Naive thymus-derived CD4-positive, alpha-beta T cell (primary cell): ENCODE measurements at regions of chr14 and their contacts with region 1.

Region 1: DNA sequence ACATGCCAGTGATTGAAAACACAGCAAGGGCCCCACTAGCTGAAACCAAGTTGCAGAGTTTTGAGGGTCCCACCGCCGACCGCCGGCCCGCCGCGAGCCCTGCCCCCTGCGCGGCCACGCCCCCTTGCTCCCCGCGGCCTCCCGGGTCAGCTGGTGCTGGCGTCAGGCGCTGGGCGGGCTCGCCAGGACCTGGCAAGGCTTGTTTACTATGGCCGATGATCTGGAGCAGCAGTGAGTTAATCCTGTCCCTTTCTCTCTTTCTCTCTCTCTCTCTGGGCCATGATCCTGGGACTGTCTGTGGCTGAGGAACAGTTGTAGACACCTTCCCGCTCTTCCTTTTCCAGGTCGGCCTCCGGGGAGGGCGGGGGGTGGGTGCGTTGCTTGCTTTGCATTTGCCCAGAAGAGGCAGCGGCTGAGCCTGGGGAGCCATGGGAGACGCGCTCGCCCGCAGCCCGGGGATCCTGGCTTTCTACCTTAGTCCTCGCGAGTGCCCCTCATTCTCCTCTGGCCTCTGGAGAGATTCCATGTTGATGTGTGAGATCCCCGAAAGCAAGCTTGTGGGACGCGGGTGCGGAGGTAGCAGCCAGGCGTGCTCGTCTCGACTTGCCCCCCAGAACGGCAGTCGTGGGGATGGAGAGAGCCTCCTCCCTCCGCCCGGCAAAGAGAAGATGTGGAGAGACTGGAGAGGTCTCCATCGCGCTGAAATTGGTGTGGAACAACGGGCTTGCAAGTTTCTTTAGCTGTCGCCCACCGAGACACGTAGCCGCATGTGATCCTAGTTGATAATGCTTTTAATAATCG is at the start of gene ABHD4:
- DNase-seq: peak; percentile 31 to 79 (median 43)
- ATAC-seq: peak; percentile 93
- H3K4me3 ChIP-seq: peak within 1 kb of the TSS; percentile 88
- H3K4me3 Mint-ChIP-seq: peak within 1 kb of the TSS; percentile 89 to 99 (median 96)
- H3K27ac ChIP-seq: peak within 1 kb of the TSS; percentile 74
- H3K27ac Mint-ChIP-seq: peak within 1 kb of the TSS; percentile 76 to 96 (median 91)
- H3K4me1 ChIP-seq: peaks cover 10 to 15% of the 10 kb centered on the region in 2 donors
- H3K4me1 Mint-ChIP-seq: peaks cover 23 to 44% (median 35%) of the 10 kb centered on the region in 7 donors
- H3K27me3 ChIP-seq: no peaks in the 10 kb centered on the region
- H3K27me3 Mint-ChIP-seq: peaks cover 0 to 12% (median 0%) of the 10 kb centered on the region in 5 donors
- total RNA-seq, gene ABHD4: 10.5 to 16.3 (median 14.7) TPM

Region 2: GRCh38 chr14:22583994-22584393 is 14.3 kb before region 1 on chr14:
- CTCF ChIA-PET with region 1: interaction called, 13 read pairs
- POLR2A ChIA-PET with region 1: interaction called, 61 read pairs
- intact Hi-C with region 1: loop called in 1 of 2 experiments (anchors 1 kb)
- DNase-seq: peak in 1 of 9 donors; percentile 15
- ATAC-seq: no peak
- H3K4me3 ChIP-seq: no peak overlapping the region
- H3K4me3 Mint-ChIP-seq: peak overlapping the region in 9 of 10 donors; percentile 29 to 86 (median 61)
- H3K27ac ChIP-seq: peak overlapping the region; percentile 48
- H3K27ac Mint-ChIP-seq: peak overlapping the region; percentile 29 to 100 (median 84)
- H3K4me1 ChIP-seq: peaks cover 37 to 50% of the 10 kb centered on the region in 2 donors
- H3K4me1 Mint-ChIP-seq: peaks cover 62 to 89% (median 78%) of the 10 kb centered on the region in 7 donors
- H3K27me3 ChIP-seq: no peaks in the 10 kb centered on the region
- H3K27me3 Mint-ChIP-seq: peaks cover 0 to 2% (median 0%) of the 10 kb centered on the region in 5 donors

Region 3: DNA sequence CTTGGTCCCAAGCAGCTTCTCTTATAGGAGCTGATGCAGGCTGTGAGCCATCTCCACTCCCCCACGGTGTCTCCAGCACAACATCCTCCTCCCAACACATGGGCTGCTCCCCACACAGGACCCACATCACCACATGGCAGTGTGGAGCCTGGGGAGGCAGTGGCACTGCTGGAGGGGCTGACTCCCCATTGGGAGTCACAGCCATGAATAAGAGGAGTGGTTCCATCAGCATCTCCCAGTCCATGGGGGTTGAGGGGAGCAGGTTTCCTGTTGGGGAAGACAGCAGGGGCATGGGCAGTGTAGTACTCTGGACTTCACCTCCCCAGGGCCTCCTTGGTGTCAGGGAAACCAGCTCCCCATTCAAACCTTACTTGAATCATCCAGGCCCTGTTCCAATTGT is 127.7 kb after region 1 on chr14:
- CTCF ChIA-PET with region 1: no interaction called
- POLR2A ChIA-PET with region 1: no interaction called
- intact Hi-C with region 1: no loop called
- DNase-seq: no peak
- ATAC-seq: no peak
- H3K4me3 ChIP-seq: no peak overlapping the region
- H3K4me3 Mint-ChIP-seq: no peak overlapping the region
- H3K27ac ChIP-seq: no peak overlapping the region
- H3K27ac Mint-ChIP-seq: no peak overlapping the region
- H3K4me1 ChIP-seq: no peaks in the 10 kb centered on the region
- H3K4me1 Mint-ChIP-seq: peaks cover 0 to 3% (median 0%) of the 10 kb centered on the region in 7 donors
- H3K27me3 ChIP-seq: no peaks in the 10 kb centered on the region
- H3K27me3 Mint-ChIP-seq: peaks cover 0 to 7% (median under 1%) of the 10 kb centered on the region in 5 donors